ENCODE measurements at regions of chr6 and their contacts with region 1.

Region 1: DNA sequence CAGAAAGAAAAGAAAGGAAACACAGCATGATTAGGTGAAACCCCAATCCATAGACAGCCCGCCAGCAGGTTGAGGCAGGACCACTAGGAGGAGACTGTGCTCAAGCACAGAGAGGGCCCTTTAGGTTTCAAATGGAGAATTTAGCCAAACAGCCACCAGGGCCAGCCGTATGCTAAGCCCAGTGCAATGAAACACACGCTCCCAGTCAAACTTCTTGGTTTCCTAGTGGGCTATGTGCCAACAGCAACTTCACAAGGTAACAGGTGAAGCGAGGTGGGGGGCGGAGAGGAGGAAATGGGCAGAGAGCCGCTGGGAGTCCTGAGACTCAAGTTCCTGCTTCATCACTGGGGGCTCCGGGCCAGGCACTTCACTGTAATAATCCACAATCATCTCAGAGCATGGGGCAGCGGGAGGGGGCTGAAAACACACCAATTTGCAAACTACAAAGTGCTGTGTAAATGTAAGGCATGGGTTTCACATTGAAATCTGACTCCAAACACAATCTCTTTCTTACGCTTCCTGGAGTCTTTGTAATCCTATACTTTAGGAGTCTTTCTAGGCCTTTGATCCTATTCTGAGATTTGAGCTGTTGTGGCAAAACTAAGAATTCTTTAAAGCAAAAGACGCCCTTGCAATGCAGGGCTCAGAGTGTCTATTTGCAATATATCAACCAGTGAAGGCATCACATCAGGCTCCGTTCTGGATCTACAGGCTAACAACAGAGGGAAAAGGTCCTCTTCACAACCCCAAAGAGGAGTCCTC is 117.3 kb downstream of the OPRM1 start:
- DNase-seq: peak in 3 of 4 experiments; percentile 18 to 37 (median 21)
- ATAC-seq: peak; percentile 97
- H3K4me3 ChIP-seq: no peak overlapping the region
- H3K27ac ChIP-seq: no peak overlapping the region
- H3K4me1 ChIP-seq: no peaks in the 10 kb centered on the region
- H3K27me3 ChIP-seq: peaks cover 0 to 2% of the 10 kb centered on the region in 2 experiments; a peak in 1 of 5 replicates
- CTCF ChIP-seq: peak; percentile 64 to 78 (median 74)
- EP300 ChIP-seq: no peak
- POLR2A ChIP-seq: no peak
- RAD21 ChIP-seq: peak; percentile 18 to 50; a peak in 3 of 4 replicates

Region 2: DNA sequence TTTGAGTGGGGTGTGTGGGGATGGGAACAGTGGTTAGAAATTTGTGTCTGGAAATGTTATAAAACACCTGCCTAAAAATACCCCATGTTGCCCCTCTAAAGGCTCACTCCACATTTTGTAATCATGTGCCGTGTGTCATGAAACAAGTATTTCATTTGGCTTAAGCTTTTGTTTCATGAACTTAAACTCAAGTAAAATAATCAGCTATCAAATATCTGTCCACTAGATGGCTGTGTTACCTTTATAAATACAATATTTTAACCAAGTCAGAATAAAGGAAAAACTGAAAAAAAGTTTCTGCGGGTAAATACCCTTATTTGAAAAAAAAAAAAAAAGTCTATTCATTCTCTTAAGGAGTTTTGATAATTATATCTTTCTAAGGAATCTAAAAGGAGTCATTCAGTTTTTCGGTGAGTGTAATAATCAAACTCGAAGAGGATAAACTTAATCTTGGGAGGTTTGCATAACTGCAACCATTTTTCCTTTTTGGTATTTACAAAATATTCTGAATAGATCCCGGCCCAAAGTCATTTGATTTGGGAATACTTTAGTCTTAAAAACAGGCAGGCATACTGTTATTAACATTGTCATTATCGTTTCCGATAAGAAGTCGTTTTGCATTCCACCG is 1123.9 kb before region 1 on chr6:
- CTCF ChIA-PET with region 1: no interaction called
- POLR2A ChIA-PET with region 1: no interaction called
- in situ Hi-C with region 1: no loop called
- intact Hi-C with region 1: loop called (anchors 5 kb)
- DNase-seq: peak in 3 of 4 experiments; percentile 17 to 30 (median 17)
- ATAC-seq: peak; percentile 58; the same call in 2 of the 3 replicates
- H3K4me3 ChIP-seq: no peak overlapping the region
- H3K27ac ChIP-seq: no peak overlapping the region
- H3K4me1 ChIP-seq: no peaks in the 10 kb centered on the region
- H3K27me3 ChIP-seq: no peaks in the 10 kb centered on the region; a peak in 1 of 5 replicates
- CTCF ChIP-seq: peak in 2 of 3 experiments; percentile 14 to 53; a peak in 3 of 6 replicates
- EP300 ChIP-seq: no peak
- POLR2A ChIP-seq: no peak
- RAD21 ChIP-seq: peak; percentile 45 to 53

Region 3: DNA sequence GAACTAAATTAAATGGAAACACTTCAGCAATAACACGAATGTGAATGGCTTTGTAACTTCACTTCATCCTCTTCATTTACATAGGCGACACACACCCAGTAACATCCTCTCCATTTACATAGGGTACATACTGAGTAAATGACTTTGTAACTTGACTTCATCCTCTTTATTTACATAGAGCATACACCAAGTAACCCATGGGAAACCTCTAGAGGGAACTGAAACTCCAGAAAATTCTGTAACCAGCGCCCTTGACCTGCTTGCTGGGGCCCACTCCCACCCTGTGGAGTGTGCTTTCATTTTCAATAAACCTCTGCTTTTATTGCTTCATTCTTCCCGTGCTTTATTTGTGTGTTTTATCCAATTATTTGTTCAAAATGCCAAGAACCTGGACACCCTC is 198.9 kb before region 1 on chr6:
- CTCF ChIA-PET with region 1: no interaction called
- POLR2A ChIA-PET with region 1: no interaction called
- in situ Hi-C with region 1: no loop called
- intact Hi-C with region 1: no loop called
- DNase-seq: no peak
- ATAC-seq: no peak
- H3K4me3 ChIP-seq: no peak overlapping the region
- H3K27ac ChIP-seq: no peak overlapping the region
- H3K4me1 ChIP-seq: no peaks in the 10 kb centered on the region
- H3K27me3 ChIP-seq: no peaks in the 10 kb centered on the region
- CTCF ChIP-seq: no peak
- EP300 ChIP-seq: no peak
- POLR2A ChIP-seq: no peak
- RAD21 ChIP-seq: no peak

Region 4: GRCh38 chr6:154343473-154344308 is 187.4 kb after region 1 on chr6:
- CTCF ChIA-PET with region 1: no interaction called
- POLR2A ChIA-PET with region 1: no interaction called
- in situ Hi-C with region 1: no loop called
- intact Hi-C with region 1: loop called (anchors 2 kb)
- DNase-seq: peak; percentile 23 to 72 (median 41)
- ATAC-seq: peak; percentile 99
- H3K4me3 ChIP-seq: no peak overlapping the region
- H3K27ac ChIP-seq: no peak overlapping the region
- H3K4me1 ChIP-seq: no peaks in the 10 kb centered on the region; a peak in 1 of 5 replicates
- H3K27me3 ChIP-seq: peaks cover 5 to 11% of the 10 kb centered on the region in 2 experiments; a peak in 2 of 5 replicates
- CTCF ChIP-seq: peak; percentile 48 to 58 (median 49); a peak in 5 of 6 replicates
- EP300 ChIP-seq: no peak
- POLR2A ChIP-seq: no peak
- RAD21 ChIP-seq: peak; percentile 16 to 32; a peak in 2 of 4 replicates

Region 5: DNA sequence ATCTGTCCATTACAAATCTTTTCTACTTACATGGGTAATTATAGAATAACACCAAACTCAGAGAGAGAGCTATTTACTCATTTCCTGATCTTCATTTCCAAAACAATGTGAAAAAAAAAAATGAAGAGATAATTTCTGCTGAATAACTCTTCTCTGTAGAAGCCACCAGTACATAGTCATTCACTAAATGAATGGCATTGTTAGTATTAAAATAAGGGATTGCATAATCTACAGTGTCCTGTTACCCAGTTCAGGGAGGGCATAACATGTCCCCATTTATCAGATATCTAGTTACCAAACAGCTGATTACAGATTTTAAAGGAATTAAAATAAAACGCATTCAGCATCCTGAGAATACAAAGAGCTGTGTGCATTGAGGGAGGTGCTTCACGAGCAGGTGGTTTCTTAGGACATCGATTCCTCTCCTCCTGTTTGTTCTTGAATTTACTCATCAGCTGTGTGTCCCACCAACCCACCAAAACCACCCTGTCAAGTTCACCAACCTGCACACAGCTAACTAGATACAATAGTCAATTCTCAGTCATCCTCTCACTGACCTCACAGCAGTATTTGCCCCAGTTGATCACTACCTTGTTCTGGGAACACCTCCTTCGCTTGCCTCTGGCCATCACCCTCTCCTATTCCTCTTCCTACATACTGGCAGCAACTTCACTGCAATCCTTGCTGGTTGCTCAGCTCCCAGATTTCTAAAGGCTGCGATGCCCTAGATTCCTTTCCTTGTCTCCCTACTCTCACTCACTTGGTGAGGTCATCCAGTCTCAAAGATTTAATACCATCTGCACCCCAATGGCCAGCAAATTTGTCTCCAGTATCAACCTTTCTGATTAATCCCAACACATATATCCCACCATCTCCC is 335.5 kb after region 1 on chr6:
- CTCF ChIA-PET with region 1: no interaction called
- POLR2A ChIA-PET with region 1: no interaction called
- in situ Hi-C with region 1: no loop called
- intact Hi-C with region 1: loop called (anchors 10 kb)
- DNase-seq: no peak
- ATAC-seq: no peak
- H3K4me3 ChIP-seq: no peak overlapping the region
- H3K27ac ChIP-seq: no peak overlapping the region
- H3K4me1 ChIP-seq: no peaks in the 10 kb centered on the region; a peak in 1 of 5 replicates
- H3K27me3 ChIP-seq: no peaks in the 10 kb centered on the region
- CTCF ChIP-seq: no peak
- EP300 ChIP-seq: no peak
- POLR2A ChIP-seq: no peak
- RAD21 ChIP-seq: no peak

Region 6: GRCh38 chr6:155174576-155175211 is 1018.4 kb after region 1 on chr6:
- CTCF ChIA-PET with region 1: interaction called, 8 read pairs
- POLR2A ChIA-PET with region 1: no interaction called
- in situ Hi-C with region 1: no loop called
- intact Hi-C with region 1: loop called (anchors 5 kb)
- DNase-seq: peak; percentile 60 to 83 (median 72)
- ATAC-seq: peak; percentile 98
- H3K4me3 ChIP-seq: no peak overlapping the region
- H3K27ac ChIP-seq: no peak overlapping the region
- H3K4me1 ChIP-seq: peaks cover 0 to 2% of the 10 kb centered on the region in 2 experiments; a peak in 1 of 5 replicates
- H3K27me3 ChIP-seq: peaks cover 5 to 15% of the 10 kb centered on the region in 2 experiments; a peak in 3 of 5 replicates
- CTCF ChIP-seq: peak; percentile 71 to 79 (median 79)
- EP300 ChIP-seq: no peak
- POLR2A ChIP-seq: no peak
- RAD21 ChIP-seq: peak; percentile 79 to 94